ENCODE measurements at regions of chr4 and their contacts with region 1.

Region 1: GRCh38 chr4:177309522-177310371 is at the start of gene NEIL3:
- DNase-seq: peak; percentile 67 to 81
- H3K4me3 ChIP-seq: peak within 1 kb of the TSS; percentile 90
- H3K27ac ChIP-seq: no peak within 1 kb of the TSS
- H3K4me1 ChIP-seq: 0 out of 2 replicates have a peak, but pooled peaks cover 6% of the 10 kb centered on the region
- H3K27me3 ChIP-seq: no peaks in the 10 kb centered on the region
- CTCF ChIP-seq: no peak
- total RNA-seq, gene NEIL3: 15.0 and 16.2 TPM in 2 replicates

Region 2: DNA sequence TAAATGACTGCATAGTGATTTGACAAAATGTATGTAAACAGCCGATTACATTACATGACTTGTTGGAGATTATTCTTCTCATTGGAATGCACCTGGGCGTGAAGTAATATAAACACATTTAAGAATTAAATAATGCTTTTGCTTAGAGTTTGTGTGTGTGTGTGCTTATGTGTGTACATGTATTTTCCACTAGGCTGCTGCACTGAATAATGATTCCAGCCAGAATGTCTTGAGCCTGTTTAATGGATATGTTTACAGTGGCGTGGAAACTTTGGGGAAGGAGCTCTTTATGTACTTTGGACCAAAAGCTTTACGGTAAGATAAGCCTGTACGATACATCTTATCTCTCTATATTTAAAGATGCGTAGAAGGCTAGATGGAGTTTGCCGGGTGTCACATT is 12.5 kb after region 1 on chr4:
- CTCF ChIA-PET with region 1: no interaction called
- POLR2A ChIA-PET with region 1: interaction called, 17 read pairs
- intact Hi-C with region 1: no loop called
- DNase-seq: no peak
- H3K4me3 ChIP-seq: no peak overlapping the region
- H3K27ac ChIP-seq: no peak overlapping the region
- H3K4me1 ChIP-seq: no peaks in the 10 kb centered on the region
- H3K27me3 ChIP-seq: no peaks in the 10 kb centered on the region
- CTCF ChIP-seq: no peak

Region 3: GRCh38 chr4:177441803-177442622 is 132.3 kb after region 1 on chr4 and contains the start of gene AGA:
- CTCF ChIA-PET with region 1: no interaction called
- POLR2A ChIA-PET with region 1: interaction called, 3 read pairs
- intact Hi-C with region 1: loop called (anchors 1 kb)
- DNase-seq: peak; percentile 71 to 92
- H3K4me3 ChIP-seq: peak within 1 kb of the TSS; percentile 91
- H3K27ac ChIP-seq: peak within 1 kb of the TSS; percentile 92
- H3K4me1 ChIP-seq: peaks cover 16% of the 10 kb centered on the region
- H3K27me3 ChIP-seq: no peaks in the 10 kb centered on the region
- CTCF ChIP-seq: no peak
- total RNA-seq, gene AGA: 13.8 and 17.0 TPM in 2 replicates

Measured in PC-9 (cell line).